Transverse colon (tissue), 4 donors: ENCODE measurements at regions of chr1 and their contacts with region 1.

Region 1: GRCh38 chr1:44636688-44637598 is 37.3 kb downstream of the TMEM53 start:
- DNase-seq: no peak
- H3K4me3 ChIP-seq: no peak overlapping the region
- H3K27ac ChIP-seq: peak overlapping the region; percentile 11 to 74 (median 62)
- H3K4me1 ChIP-seq: peaks cover 16 to 39% (median 29%) of the 10 kb centered on the region in 4 donors
- H3K27me3 ChIP-seq: no peaks in the 10 kb centered on the region
- CTCF ChIP-seq: no peak
- EP300 ChIP-seq: no peak
- POLR2A ChIP-seq: no peak

Region 2: DNA sequence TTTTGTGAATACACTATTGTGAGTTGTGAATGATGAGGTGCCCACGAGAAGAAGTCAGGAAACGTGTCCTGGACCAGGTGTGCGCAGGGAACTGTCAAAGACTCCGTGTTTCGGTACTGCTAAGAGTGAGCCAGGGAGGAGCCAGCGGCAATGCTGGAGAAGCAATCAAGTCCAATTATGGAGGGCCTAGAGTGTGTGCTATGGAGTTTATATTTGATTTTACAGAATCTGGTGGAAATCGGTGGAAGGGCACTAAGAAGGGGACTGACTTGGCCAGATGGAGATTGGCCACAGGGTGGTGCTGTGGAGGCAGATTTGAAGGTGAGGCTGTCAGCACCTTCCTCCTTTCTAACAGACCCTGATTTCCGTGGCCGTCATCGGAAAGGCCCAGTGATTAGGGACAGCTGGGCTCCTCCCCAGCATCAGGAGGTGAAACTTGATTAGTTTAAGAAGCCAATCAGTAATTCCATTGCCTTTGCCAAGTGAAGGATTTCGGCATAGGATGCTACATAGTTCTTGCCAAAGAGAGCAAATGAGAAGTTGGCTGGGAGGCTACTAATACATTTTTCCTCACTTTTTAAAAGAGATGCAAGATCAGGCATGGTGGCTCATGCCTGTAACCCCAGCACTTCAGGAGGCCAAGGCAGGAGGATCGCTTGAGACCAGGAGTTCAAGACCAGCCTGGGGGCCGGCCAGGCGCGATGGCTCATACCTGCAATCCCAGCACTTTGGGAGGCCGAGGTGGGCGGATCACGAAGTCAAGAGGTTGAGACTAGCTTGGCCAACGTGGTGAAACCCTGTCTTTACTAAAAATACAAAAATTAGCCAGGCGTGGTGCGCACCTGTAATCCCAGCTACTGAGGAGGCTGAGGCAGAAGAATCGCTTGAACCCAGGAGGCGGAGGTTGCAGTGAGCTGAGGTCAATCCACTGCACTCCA is 199.1 kb after region 1 on chr1:
- in situ Hi-C with region 1: no loop called
- intact Hi-C with region 1: no loop called
- DNase-seq: peak; percentile 90
- H3K4me3 ChIP-seq: no peak overlapping the region
- H3K27ac ChIP-seq: no peak overlapping the region
- H3K4me1 ChIP-seq: peaks cover 0 to 6% (median 2%) of the 10 kb centered on the region in 4 donors
- H3K27me3 ChIP-seq: no peaks in the 10 kb centered on the region
- CTCF ChIP-seq: peak; percentile 76 to 85 (median 81)
- EP300 ChIP-seq: no peak
- POLR2A ChIP-seq: no peak

Region 3: DNA sequence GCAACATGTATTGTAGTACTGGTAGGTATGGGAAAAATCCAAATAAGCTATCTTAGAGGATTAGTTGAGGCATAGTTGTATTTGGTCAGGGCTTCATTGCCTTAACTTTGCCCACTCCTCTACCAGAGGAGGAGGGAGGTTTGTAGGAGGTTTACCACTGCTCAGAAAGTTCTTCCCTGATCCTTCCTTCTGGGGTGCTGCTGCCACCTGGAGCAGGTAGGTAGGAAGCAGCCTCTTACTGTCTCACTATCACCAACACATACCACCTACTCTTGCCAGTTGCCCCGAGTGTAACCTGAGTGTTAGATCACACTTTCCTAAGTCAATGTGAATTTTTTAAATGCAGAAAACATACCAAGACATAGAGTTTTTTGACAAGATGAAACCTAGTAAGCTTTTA is 593.6 kb after region 1 on chr1:
- in situ Hi-C with region 1: no loop called
- intact Hi-C with region 1: loop called (anchors 5 kb)
- DNase-seq: peak; percentile 40
- H3K4me3 ChIP-seq: no peak overlapping the region
- H3K27ac ChIP-seq: no peak overlapping the region
- H3K4me1 ChIP-seq: no peaks in the 10 kb centered on the region
- H3K27me3 ChIP-seq: no peaks in the 10 kb centered on the region
- CTCF ChIP-seq: peak; percentile 30 to 57 (median 43)
- EP300 ChIP-seq: no peak
- POLR2A ChIP-seq: no peak